ENCODE measurements at regions of chr10 and their contacts with region 1.

Region 1: GRCh38 chr10:69061305-69062161 is 26.4 kb upstream of the SRGN start:
- DNase-seq: peak; percentile 47
- H3K4me3 Mint-ChIP-seq: peak overlapping the region; percentile 62
- H3K27ac Mint-ChIP-seq: peak overlapping the region; percentile 81
- H3K4me1 Mint-ChIP-seq: peaks cover 52% of the 10 kb centered on the region
- H3K27me3 Mint-ChIP-seq: no peaks in the 10 kb centered on the region

Region 2: DNA sequence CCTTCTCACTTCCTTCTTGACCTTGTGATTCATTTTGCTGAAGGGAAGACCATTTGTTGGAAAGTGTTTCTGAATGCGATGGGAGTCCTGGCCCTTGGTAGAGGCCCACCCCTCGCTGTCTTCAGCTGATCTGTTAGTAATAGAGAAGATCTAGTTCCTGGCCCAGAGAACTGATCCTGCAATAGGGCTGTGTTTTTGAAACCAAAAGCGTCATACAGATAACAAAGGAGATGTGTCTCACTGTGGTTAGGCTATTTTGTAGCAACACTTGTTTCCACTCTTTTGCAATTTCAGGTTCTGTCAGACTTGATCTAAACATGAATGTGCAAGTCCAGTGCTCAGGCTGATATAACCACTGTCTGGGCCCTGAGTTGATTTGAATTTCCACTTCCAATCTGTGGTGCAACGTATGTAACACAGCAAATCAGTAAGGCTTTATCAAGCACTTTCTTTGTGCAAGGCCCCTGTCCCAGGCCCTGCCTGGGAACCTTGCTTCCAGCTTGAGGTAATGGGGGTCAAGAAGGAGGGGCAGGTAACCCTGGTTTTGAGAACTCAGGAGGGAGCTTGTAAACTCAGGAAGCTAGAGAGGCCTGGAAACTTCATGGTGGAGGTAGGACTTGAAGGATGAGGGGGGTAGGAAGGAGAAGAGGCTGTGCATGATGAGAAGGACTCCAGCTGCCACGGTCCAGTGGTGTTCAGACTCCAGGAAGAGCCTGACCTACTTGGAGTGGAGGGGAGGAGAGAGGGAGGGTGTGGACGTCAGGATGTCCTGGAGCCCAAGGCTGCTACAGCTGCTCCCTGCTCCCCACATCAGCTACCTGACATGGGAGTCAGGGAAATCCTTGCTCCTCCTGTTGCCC is 15.9 kb before region 1 on chr10:
- CTCF ChIA-PET with region 1: interaction called, 15 read pairs
- POLR2A ChIA-PET with region 1: no interaction called
- DNase-seq: peak; percentile 52
- H3K4me3 Mint-ChIP-seq: peak overlapping the region; percentile 56
- H3K27ac Mint-ChIP-seq: peak overlapping the region; percentile 97
- H3K4me1 Mint-ChIP-seq: peaks cover 48% of the 10 kb centered on the region
- H3K27me3 Mint-ChIP-seq: no peaks in the 10 kb centered on the region

Region 3: GRCh38 chr10:69051303-69051702 is 10.2 kb before region 1 on chr10:
- CTCF ChIA-PET with region 1: interaction called, 15 read pairs
- POLR2A ChIA-PET with region 1: no interaction called
- DNase-seq: peak; percentile 40
- H3K4me3 Mint-ChIP-seq: no peak overlapping the region
- H3K27ac Mint-ChIP-seq: no peak overlapping the region
- H3K4me1 Mint-ChIP-seq: peaks cover 59% of the 10 kb centered on the region
- H3K27me3 Mint-ChIP-seq: no peaks in the 10 kb centered on the region

Region 4: DNA sequence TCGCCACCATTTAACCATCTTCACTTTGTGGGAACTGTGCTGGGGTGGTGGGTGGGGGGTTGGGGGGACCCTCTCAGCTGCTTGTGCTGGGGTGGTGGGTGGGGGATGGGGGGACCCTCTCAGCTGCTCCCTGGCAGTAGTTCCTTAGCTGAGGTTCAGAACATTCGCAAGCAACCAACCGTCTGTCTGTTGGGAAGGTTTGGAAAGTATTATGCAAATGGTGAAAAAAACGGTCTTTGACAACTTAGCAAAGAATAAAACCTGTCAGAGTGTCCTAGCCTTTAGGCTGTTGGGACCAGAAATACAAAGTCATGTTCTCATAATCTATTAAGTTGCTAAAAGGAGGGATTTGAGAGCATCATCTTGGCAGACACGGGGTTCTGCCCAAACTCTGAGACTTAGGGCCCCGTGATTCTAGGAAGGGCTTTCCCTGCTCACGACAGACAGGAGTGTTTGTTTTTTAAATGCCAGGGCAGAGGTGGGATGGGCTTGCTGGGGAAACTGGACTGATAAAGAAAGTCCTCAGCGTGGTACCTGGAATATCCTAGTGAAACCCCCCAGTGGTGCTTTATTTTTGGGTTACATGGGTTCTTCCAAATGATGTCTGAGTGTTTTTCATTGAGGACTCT is 12.3 kb after region 1 on chr10:
- CTCF ChIA-PET with region 1: interaction called, 12 read pairs
- POLR2A ChIA-PET with region 1: no interaction called
- DNase-seq: no peak
- H3K4me3 Mint-ChIP-seq: no peak overlapping the region
- H3K27ac Mint-ChIP-seq: no peak overlapping the region
- H3K4me1 Mint-ChIP-seq: peaks cover 16% of the 10 kb centered on the region
- H3K27me3 Mint-ChIP-seq: no peaks in the 10 kb centered on the region

Region 5: DNA sequence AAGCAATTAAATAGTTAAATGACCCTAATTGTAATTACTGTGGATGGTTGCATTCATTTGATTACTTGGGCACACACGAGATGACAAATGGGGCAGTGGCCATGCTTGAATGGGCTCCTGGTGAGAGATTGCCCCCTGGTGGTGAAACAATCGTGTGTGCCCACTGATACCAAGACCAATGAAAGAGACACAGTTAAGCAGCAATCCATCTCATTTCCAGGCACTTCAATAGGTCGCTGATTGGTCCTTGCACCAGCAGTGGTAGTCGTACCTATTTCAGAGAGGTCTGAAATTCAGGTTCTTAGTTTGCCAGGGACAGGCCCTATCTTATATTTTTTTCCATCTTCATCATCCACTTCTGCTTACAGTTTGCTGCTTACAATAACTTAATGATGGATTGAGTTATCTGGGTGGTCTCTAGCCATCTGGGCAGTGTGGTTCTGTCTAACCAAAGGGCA is 1818.6 kb after region 1 on chr10:
- CTCF ChIA-PET with region 1: no interaction called
- POLR2A ChIA-PET with region 1: no interaction called
- DNase-seq: peak; percentile 86
- H3K4me3 Mint-ChIP-seq: no peak overlapping the region
- H3K27ac Mint-ChIP-seq: no peak overlapping the region
- H3K4me1 Mint-ChIP-seq: peaks cover 6% of the 10 kb centered on the region
- H3K27me3 Mint-ChIP-seq: no peaks in the 10 kb centered on the region